ENCODE measurements at regions of chr19 and their contacts with region 1.

Region 1: DNA sequence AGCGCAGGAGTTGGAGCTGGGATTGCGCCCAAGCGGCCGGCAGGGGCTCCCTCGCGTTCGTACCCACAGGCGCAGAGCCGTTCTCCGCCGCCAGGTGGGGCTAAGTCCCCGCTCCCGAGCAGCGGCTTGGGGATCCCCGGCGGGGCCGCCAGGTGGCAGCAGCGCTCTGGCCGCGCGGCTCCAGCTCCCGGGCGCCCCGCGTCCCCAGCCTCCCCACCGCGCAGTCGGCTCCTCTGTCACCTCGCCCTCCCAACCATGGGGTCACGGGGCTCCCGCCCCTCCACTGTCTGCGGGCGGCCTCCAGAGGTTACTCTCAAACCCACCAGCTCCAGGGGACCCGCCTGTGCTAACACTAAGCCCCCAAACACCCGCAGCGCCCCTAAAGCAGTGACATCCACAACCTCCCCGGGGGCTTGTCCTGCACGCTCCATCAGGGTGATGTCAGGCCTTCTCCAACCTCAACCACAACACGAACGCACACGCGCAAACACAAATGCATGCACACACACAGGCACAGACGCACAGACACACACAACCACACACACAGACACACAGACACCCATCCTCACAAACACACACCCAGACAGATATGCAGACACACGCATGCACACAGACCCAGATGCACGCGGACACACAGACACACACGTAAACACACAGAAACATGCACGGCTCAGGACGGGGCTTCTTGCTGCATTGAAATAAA is 18.4 kb upstream of the KCTD15 start:
- DNase-seq: peak; percentile 85
- ATAC-seq: peak; percentile 82
- H3K4me3 Mint-ChIP-seq: peak overlapping the region; percentile 51
- H3K27ac Mint-ChIP-seq: no peak overlapping the region
- H3K4me1 Mint-ChIP-seq: peaks cover 16% of the 10 kb centered on the region
- H3K27me3 Mint-ChIP-seq: peaks cover 12% of the 10 kb centered on the region
- CTCF ChIP-seq: peak; percentile 100

Region 2: DNA sequence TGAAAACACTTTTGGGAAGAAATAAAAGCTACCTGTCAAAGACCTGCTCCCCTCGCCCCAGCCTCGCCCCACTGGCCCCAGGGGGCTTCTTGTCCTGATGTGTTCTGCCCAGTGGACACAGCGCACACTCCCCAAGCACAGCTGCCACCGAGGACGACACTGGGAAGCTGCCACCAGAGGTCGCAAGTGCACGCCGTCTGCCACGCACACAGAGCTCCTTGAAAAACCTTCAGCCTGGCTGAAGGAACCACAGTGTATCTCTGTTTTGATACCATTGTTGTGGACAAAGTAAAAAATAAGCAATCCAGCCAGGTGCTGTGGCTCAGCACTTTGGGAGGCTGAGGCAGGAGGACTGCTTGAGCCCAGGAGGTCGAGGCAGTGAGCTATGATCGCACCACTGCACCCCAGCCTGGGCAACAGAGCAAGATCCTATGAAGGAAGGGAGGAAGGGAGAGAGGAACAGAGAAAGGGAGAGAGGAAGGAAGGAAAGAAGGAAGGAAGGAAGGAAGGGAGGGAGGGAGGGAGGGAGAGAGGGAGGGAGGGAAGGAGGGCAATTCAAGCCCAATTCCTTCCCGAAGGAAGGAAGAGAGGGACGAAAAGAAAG is 347.5 kb before region 1 on chr19:
- CTCF ChIA-PET with region 1: interaction called, 11 read pairs
- POLR2A ChIA-PET with region 1: no interaction called
- DNase-seq: peak; percentile 81
- ATAC-seq: peak; percentile 81
- H3K4me3 Mint-ChIP-seq: no peak overlapping the region
- H3K27ac Mint-ChIP-seq: peak overlapping the region; percentile 44
- H3K4me1 Mint-ChIP-seq: no peaks in the 10 kb centered on the region
- H3K27me3 Mint-ChIP-seq: no peaks in the 10 kb centered on the region
- CTCF ChIP-seq: peak; percentile 66

Region 3: GRCh38 chr19:33705090-33705847 is 73.0 kb before region 1 on chr19:
- CTCF ChIA-PET with region 1: no interaction called
- POLR2A ChIA-PET with region 1: no interaction called
- DNase-seq: peak; percentile 53
- ATAC-seq: peak; percentile 63; the same call in 1 of the 2 replicates
- H3K4me3 Mint-ChIP-seq: no peak overlapping the region
- H3K27ac Mint-ChIP-seq: no peak overlapping the region
- H3K4me1 Mint-ChIP-seq: peaks cover 38% of the 10 kb centered on the region
- H3K27me3 Mint-ChIP-seq: no peaks in the 10 kb centered on the region
- CTCF ChIP-seq: no peak

Region 4: DNA sequence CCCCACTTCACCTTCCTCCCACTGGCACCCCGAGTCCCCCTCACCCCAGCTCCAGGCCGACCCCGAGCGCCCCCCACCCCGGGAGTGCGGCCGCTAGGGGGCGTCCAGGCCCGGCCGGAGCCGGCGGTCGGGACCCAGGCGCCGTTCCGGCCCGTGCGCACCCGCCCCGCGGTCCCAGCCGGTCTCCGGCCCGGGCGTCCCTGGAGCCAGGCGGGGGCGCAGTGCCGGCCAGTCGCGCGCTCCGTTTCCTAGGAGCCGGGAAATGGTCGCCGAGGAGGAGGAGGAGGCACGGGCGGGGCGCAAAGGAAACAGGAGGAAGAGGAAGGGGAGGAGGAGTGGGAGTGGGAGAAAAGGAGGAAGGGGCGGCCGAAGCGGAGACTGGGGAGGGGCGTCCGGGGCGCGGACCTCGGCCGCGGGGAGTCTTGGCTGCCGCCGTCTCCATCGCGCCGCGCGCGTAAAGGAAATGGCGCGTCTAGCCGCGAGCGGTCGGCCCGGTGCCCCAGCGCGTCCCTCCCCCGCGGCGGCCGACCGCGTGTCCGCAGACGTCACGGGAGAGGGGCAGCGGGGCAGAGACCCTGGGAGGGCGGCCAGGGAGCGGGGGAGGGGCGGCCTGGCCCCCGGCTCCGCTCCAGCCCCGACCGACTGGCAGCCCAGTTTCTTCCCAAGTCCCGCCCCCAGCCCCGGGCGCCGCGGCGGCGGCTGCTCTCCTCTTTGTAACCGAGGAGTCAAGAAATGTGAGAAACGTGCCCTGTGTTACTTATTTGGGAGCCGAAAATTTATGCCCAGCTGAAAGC is 17.3 kb after region 1 on chr19:
- CTCF ChIA-PET with region 1: interaction called, 53 read pairs
- POLR2A ChIA-PET with region 1: interaction called, 4 read pairs
- DNase-seq: peak; percentile 88
- ATAC-seq: peak; percentile 66
- H3K4me3 Mint-ChIP-seq: peak overlapping the region; percentile 68
- H3K27ac Mint-ChIP-seq: no peak overlapping the region; the same call in 1 of the 2 replicates
- H3K4me1 Mint-ChIP-seq: peaks cover 45% of the 10 kb centered on the region
- H3K27me3 Mint-ChIP-seq: 0 out of 2 replicates have a peak, but pooled peaks cover 3% of the 10 kb centered on the region
- CTCF ChIP-seq: peak; percentile 75

Region 5: GRCh38 chr19:33947265-33947964 is 169.2 kb after region 1 on chr19:
- CTCF ChIA-PET with region 1: interaction called, 21 read pairs
- POLR2A ChIA-PET with region 1: no interaction called
- DNase-seq: no peak
- ATAC-seq: no peak; the same call in 1 of the 2 replicates
- H3K4me3 Mint-ChIP-seq: no peak overlapping the region
- H3K27ac Mint-ChIP-seq: no peak overlapping the region
- H3K4me1 Mint-ChIP-seq: peaks cover 17% of the 10 kb centered on the region
- H3K27me3 Mint-ChIP-seq: peaks cover 2% of the 10 kb centered on the region; the same call in 1 of the 2 replicates
- CTCF ChIP-seq: no peak

Region 6: GRCh38 chr19:34088303-34088702 is 310.1 kb after region 1 on chr19:
- CTCF ChIA-PET with region 1: interaction called, 18 read pairs
- POLR2A ChIA-PET with region 1: no interaction called
- DNase-seq: no peak
- ATAC-seq: no peak
- H3K4me3 Mint-ChIP-seq: no peak overlapping the region
- H3K27ac Mint-ChIP-seq: peak overlapping the region; percentile 10; the same call in 1 of the 2 replicates
- H3K4me1 Mint-ChIP-seq: peaks cover 27% of the 10 kb centered on the region
- H3K27me3 Mint-ChIP-seq: no peaks in the 10 kb centered on the region
- CTCF ChIP-seq: no peak

Region 7: DNA sequence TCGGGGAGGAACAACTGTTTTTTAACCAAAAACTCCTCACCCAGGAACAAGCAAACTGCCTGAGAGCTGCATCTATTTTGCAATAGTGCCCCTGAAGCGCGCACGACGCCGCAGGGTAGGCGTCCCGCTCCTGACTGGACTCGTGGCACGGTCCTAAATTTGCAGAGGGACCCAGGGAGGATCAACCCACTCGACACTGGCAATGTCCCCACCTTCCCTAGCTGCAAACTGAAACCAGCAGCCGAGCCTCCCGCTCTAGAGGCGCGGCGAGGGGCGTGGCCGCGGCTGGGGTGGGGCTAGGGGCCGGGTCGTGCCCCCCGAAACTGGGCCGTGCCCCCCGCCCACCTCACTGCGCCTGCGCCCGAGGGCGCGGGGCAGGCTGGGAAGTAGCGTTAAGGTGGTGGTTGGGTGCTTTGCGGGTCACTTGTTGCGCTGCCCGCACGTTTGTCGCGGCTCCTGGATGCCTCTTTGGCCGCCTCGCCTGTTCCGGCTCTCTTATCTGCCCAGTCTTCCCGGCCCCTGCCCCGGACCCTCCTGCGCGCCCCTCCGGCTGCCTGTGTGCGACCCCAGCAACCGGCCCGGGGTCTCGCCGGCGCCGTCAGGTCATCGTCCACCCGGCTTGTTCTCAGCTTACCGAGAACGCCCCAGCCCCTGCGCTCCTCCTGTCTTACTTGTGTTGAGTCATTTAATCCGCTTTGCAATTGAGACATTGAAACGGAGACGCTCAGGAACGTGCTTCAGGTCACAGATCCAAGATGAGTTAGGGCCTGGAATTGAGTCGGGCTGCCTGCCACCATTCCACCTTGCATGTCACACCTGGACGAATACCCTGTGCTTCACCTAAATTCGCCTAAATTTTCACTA is 356.2 kb after region 1 on chr19:
- CTCF ChIA-PET with region 1: interaction called, 17 read pairs
- POLR2A ChIA-PET with region 1: no interaction called
- DNase-seq: peak; percentile 91
- ATAC-seq: peak; percentile 97
- H3K4me3 Mint-ChIP-seq: peak overlapping the region; percentile 87
- H3K27ac Mint-ChIP-seq: peak overlapping the region; percentile 98
- H3K4me1 Mint-ChIP-seq: peaks cover 4% of the 10 kb centered on the region; the same call in 1 of the 2 replicates
- H3K27me3 Mint-ChIP-seq: peaks cover 12% of the 10 kb centered on the region; the same call in 1 of the 2 replicates
- CTCF ChIP-seq: no peak